Activated B cell treated with CpG ODN at 0.5 μM for 24 hours (primary cell): ENCODE measurements at regions of chr10 and their contacts with region 1.

Region 1: GRCh38 chr10:110959379-110960332 is 40.3 kb downstream of the SHOC2 start:
- DNase-seq: no peak
- ATAC-seq: no peak
- H3K4me3 Mint-ChIP-seq: no peak overlapping the region
- H3K27ac Mint-ChIP-seq: no peak overlapping the region
- H3K4me1 Mint-ChIP-seq: peaks cover 82% of the 10 kb centered on the region
- H3K27me3 Mint-ChIP-seq: no peaks in the 10 kb centered on the region
- CTCF ChIP-seq: no peak

Region 2: DNA sequence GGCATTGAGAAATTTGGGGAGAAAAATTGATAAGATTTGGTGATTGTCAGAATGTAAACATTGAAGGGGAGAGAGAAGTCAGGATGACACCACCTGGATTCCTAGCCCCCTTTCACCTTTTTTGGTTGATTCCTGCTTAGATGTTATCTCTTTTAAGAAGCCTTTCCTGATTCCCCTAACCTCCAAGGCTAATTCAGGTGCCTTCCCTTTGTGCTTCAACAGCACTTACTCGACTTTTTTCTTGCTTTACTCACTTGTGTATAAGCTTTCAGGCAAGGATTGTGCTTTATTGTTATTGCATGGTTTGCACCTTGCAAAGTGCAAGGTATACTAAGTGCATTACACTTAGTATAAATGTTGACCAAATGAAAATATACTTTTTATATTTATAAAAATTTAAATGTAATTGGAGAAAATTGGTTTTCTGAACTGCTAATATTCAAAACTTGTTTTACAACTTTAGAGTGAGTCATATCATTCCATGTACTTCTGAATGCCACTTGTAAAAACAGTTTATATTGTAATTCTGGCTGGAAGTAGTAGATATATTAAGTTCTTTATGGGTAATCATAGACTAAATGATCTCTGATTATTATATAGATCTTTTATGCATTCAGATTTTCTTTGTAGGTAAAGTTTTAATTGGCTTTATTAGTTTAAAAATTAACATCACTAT is 27.0 kb before region 1 on chr10:
- CTCF ChIA-PET with region 1: no interaction called
- POLR2A ChIA-PET with region 1: no interaction called
- intact Hi-C with region 1: loop called (anchors 2 kb)
- DNase-seq: no peak
- ATAC-seq: no peak
- H3K4me3 Mint-ChIP-seq: no peak overlapping the region
- H3K27ac Mint-ChIP-seq: no peak overlapping the region
- H3K4me1 Mint-ChIP-seq: peaks cover 37% of the 10 kb centered on the region
- H3K27me3 Mint-ChIP-seq: no peaks in the 10 kb centered on the region
- CTCF ChIP-seq: no peak

Region 3: GRCh38 chr10:110944792-110945396 is 14.8 kb before region 1 on chr10:
- CTCF ChIA-PET with region 1: interaction called, 3 read pairs
- POLR2A ChIA-PET with region 1: no interaction called
- intact Hi-C with region 1: loop called (anchors 2 kb)
- DNase-seq: no peak
- ATAC-seq: peak; percentile 56
- H3K4me3 Mint-ChIP-seq: peak overlapping the region; percentile 25
- H3K27ac Mint-ChIP-seq: no peak overlapping the region
- H3K4me1 Mint-ChIP-seq: peaks cover 73% of the 10 kb centered on the region
- H3K27me3 Mint-ChIP-seq: no peaks in the 10 kb centered on the region
- CTCF ChIP-seq: no peak